ENCODE measurements at regions of chr10 and their contacts with region 1.

Region 1: DNA sequence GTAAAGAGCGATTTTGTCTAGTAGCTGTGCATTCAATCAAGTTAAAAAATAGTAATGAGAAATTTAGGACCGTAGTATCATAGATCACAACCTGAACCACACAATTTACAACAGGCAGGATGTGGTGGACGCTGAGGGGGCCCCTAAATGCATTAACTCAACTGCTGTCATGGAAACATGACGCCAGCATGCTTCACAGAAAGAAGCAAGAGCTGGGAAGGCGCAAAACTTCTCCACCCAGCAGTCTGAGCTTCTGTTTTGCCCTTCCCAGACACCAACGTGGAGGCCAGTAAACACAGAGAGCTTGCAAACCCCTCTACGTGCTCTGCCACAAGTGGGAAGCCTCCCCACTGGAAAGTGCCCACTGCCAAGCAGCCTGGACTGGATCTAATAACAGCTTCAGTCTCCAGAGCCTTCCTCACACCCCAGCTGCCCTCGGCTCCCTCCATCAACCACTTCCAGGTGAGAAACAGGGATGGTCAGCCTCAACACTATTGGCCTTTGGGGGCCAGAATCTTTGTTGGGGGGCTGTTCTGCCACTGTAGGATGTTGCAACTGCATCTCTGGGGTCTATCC is 151.8 kb downstream of the SFMBT2 start:
- DNase-seq: peak; percentile 19
- H3K4me3 ChIP-seq: no peak overlapping the region
- CTCF ChIP-seq: no peak

Region 2: DNA sequence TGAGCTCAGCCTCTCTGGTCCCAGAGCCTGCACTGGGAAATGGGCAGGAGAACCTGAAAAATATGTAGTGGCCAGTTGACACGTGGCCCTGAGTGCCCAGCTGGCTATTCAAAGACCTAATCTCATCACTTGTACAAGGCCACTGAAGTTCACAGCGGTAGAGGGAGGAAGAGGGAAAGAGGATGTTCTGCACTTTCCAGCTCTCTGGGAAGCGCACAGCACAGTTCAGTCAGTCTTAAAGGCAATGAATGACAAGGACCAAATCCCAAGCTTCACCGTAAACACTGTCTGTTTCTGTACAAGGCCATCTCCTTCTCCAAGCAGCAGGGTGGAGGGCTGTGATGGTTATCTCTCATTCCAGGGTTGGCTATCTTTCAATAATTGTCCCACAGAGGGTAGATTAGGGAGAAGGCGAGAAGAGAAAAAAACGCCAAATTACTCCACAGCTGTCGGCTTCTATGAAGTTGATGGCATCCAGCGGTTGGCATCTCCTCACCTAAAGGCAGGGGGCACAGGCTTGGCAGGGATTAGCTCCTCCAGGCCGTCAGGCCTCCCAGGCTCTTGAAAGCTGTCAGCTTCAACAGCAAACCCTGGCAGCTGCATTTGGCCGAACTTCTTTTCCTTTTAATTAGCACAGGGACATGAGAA is 141.2 kb after region 1 on chr10:
- in situ Hi-C with region 1: loop called (anchors 5 kb)
- DNase-seq: no peak
- H3K4me3 ChIP-seq: no peak overlapping the region
- CTCF ChIP-seq: no peak